ENCODE measurements at regions of chr12 and their contacts with region 1.

Region 1: DNA sequence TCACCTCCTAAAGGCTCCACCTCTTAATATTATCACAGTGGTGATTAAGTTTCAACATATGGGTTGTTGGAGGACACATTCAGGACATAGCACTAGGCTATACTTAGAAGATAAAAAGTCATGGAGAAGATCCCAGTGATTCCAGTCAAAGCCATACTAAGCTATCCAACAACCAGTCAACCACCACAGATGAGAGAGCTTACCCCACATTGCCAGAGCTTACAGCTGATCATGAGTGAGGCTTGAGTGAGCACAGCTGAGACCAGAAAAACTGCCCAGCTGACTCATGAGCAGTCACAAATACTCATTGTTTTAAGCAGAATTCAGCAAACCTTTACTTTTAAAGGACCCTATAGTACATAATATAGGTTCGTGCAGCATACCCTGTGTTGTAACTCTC is 85.1 kb downstream of the DRAM1 start:
- DNase-seq: peak; percentile 64
- ATAC-seq: peak; percentile 67
- H3K4me3 ChIP-seq: no peak overlapping the region
- H3K27ac ChIP-seq: no peak overlapping the region
- H3K4me1 ChIP-seq: peaks cover 1% of the 10 kb centered on the region; the same call in 1 of the 2 replicates
- H3K27me3 ChIP-seq: no peaks in the 10 kb centered on the region
- CTCF ChIP-seq: no peak
- POLR2A ChIP-seq: no peak
- RAD21 ChIP-seq: no peak

Region 2: GRCh38 chr12:102740141-102740955 is 777.9 kb after region 1 on chr12:
- CTCF ChIA-PET with region 1: interaction called, 4 read pairs
- POLR2A ChIA-PET with region 1: no interaction called
- dilution Hi-C with region 1: no loop called
- in situ Hi-C with region 1: loop called (anchors 25 kb)
- intact Hi-C with region 1: no loop called
- DNase-seq: peak; percentile 36
- ATAC-seq: peak; percentile 68; the same call in 1 of the 2 replicates
- H3K4me3 ChIP-seq: no peak overlapping the region
- H3K27ac ChIP-seq: no peak overlapping the region
- H3K4me1 ChIP-seq: no peaks in the 10 kb centered on the region
- H3K27me3 ChIP-seq: no peaks in the 10 kb centered on the region
- CTCF ChIP-seq: peak; percentile 46
- POLR2A ChIP-seq: no peak
- RAD21 ChIP-seq: peak; percentile 63

Measured in IMR-90 (cell line).